CD8-positive, alpha-beta T cell (primary cell): ENCODE measurements at regions of chr19 and their contacts with region 1.

Region 1: GRCh38 chr19:16076154-16076957 is at the start of gene TPM4:
- DNase-seq: peak; percentile 57 to 94 (median 81)
- ATAC-seq: peak; percentile 48
- H3K4me3 ChIP-seq: peak within 1 kb of the TSS; percentile 59 to 79
- H3K4me3 Mint-ChIP-seq: peak within 1 kb of the TSS; percentile 79
- H3K27ac ChIP-seq: peak within 1 kb of the TSS; percentile 64 to 92
- H3K27ac Mint-ChIP-seq: peak within 1 kb of the TSS; percentile 96
- H3K4me1 ChIP-seq: peaks cover 81% of the 10 kb centered on the region
- H3K4me1 Mint-ChIP-seq: peaks cover 74% of the 10 kb centered on the region
- H3K27me3 ChIP-seq: no peaks in the 10 kb centered on the region
- H3K27me3 Mint-ChIP-seq: no peaks in the 10 kb centered on the region
- CTCF ChIP-seq: no peak
- total RNA-seq, gene TPM4: 187 to 199 TPM

Region 2: DNA sequence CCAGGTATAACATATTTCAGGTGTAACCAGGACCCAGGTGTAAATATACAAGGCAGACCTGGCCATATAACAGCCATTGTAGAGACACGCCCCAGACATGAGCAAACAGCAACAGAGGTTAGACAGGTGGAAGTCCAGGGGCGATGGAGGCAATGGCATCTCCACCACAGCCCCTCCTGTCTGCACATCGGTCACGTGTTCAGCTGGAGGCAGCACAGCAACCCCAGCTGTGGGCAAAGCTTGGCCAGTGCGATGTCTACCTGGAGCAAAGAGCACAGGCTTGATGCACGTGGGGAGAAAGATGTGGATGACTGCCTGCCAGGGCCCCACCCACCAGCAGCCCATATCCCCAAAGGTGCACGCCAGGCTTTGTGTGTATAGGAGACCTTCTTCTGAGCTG is 182.9 kb before region 1 on chr19:
- CTCF ChIA-PET with region 1: no interaction called
- POLR2A ChIA-PET with region 1: no interaction called
- intact Hi-C with region 1: no loop called
- DNase-seq: no peak
- ATAC-seq: no peak
- H3K4me3 ChIP-seq: no peak overlapping the region
- H3K4me3 Mint-ChIP-seq: no peak overlapping the region
- H3K27ac ChIP-seq: no peak overlapping the region
- H3K27ac Mint-ChIP-seq: no peak overlapping the region
- H3K4me1 ChIP-seq: no peaks in the 10 kb centered on the region
- H3K4me1 Mint-ChIP-seq: no peaks in the 10 kb centered on the region
- H3K27me3 ChIP-seq: peaks cover 0 to 3% of the 10 kb centered on the region in 2 experiments
- H3K27me3 Mint-ChIP-seq: peaks cover 20% of the 10 kb centered on the region
- CTCF ChIP-seq: no peak

Region 3: DNA sequence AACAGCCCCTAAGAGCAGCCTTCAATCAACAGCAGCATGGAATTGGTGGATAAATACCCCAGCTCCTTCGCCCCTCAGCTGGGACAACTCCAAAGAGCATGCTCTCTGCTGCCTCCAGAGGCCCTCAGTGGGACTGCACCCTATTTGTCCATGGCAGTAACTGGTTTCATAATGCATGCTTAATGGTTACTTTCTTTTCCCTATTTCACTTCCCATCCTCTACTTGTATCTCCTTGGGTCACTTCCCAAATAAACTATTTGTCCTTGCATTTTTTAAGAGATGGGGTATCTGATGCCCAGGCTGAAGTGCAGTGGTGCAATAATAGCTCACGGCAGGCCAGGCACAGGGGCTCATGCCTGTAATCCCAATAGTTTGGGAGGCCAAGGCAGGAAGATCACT is 13.6 kb before region 1 on chr19:
- CTCF ChIA-PET with region 1: interaction called, 33 read pairs
- POLR2A ChIA-PET with region 1: no interaction called
- intact Hi-C with region 1: loop called in 1 of 2 experiments (anchors 1 kb)
- DNase-seq: peak; percentile 51 to 78 (median 66)
- ATAC-seq: peak; percentile 86
- H3K4me3 ChIP-seq: no peak overlapping the region
- H3K4me3 Mint-ChIP-seq: no peak overlapping the region
- H3K27ac ChIP-seq: no peak overlapping the region
- H3K27ac Mint-ChIP-seq: no peak overlapping the region
- H3K4me1 ChIP-seq: peaks cover 26% of the 10 kb centered on the region
- H3K4me1 Mint-ChIP-seq: peaks cover 16% of the 10 kb centered on the region
- H3K27me3 ChIP-seq: no peaks in the 10 kb centered on the region
- H3K27me3 Mint-ChIP-seq: no peaks in the 10 kb centered on the region
- CTCF ChIP-seq: peak; percentile 85

Region 4: GRCh38 chr19:16088351-16089009 is 12.1 kb after region 1 on chr19:
- CTCF ChIA-PET with region 1: interaction called, 80 read pairs
- POLR2A ChIA-PET with region 1: interaction called, 21 read pairs
- intact Hi-C with region 1: loop called in 1 of 2 experiments (anchors 1 kb)
- DNase-seq: no peak
- ATAC-seq: no peak
- H3K4me3 ChIP-seq: no peak overlapping the region
- H3K4me3 Mint-ChIP-seq: no peak overlapping the region
- H3K27ac ChIP-seq: no peak overlapping the region
- H3K27ac Mint-ChIP-seq: no peak overlapping the region
- H3K4me1 ChIP-seq: peaks cover 26% of the 10 kb centered on the region
- H3K4me1 Mint-ChIP-seq: peaks cover 30% of the 10 kb centered on the region
- H3K27me3 ChIP-seq: no peaks in the 10 kb centered on the region
- H3K27me3 Mint-ChIP-seq: no peaks in the 10 kb centered on the region
- CTCF ChIP-seq: no peak

Region 5: DNA sequence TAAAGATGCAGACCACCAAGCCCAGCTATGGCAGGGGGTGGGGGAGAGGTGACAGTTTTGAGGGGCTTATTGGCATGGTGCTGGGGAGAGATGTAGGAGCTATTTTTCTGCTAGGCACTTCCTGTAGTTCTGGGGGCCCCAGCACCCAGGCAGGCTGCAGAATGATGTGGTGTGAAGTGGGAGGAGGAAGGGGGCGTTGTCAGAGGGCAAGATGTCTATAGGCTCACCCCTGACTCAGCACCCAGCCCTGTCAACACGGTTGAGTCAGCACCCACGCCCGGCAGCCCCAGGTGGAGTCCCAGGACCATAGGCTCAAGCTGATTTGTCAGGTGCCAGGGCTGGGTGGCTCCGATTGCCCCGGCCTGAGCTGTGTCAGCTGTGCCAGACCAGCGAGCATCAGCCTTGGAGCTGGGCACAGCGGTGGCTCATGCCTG is 254.0 kb after region 1 on chr19:
- CTCF ChIA-PET with region 1: no interaction called
- POLR2A ChIA-PET with region 1: interaction called, 3 read pairs
- intact Hi-C with region 1: loop called in 1 of 2 experiments (anchors 5 kb)
- DNase-seq: peak; percentile 88 to 99 (median 95)
- ATAC-seq: peak; percentile 74
- H3K4me3 ChIP-seq: no peak overlapping the region
- H3K4me3 Mint-ChIP-seq: peak overlapping the region; percentile 59
- H3K27ac ChIP-seq: peak overlapping the region; percentile 93 to 99
- H3K27ac Mint-ChIP-seq: peak overlapping the region; percentile 96
- H3K4me1 ChIP-seq: peaks cover 36% of the 10 kb centered on the region
- H3K4me1 Mint-ChIP-seq: peaks cover 46% of the 10 kb centered on the region
- H3K27me3 ChIP-seq: no peaks in the 10 kb centered on the region
- H3K27me3 Mint-ChIP-seq: no peaks in the 10 kb centered on the region
- CTCF ChIP-seq: no peak

Region 6: GRCh38 chr19:16371540-16371986 is 295.2 kb after region 1 on chr19:
- CTCF ChIA-PET with region 1: interaction called, 4 read pairs
- POLR2A ChIA-PET with region 1: no interaction called
- intact Hi-C with region 1: loop called in 1 of 2 experiments (anchors 5 kb)
- DNase-seq: peak; percentile 87 to 97 (median 92)
- ATAC-seq: peak; percentile 41
- H3K4me3 ChIP-seq: peak overlapping the region; percentile 33 to 44
- H3K4me3 Mint-ChIP-seq: no peak overlapping the region
- H3K27ac ChIP-seq: peak overlapping the region; percentile 91 to 95
- H3K27ac Mint-ChIP-seq: no peak overlapping the region
- H3K4me1 ChIP-seq: peaks cover 95% of the 10 kb centered on the region
- H3K4me1 Mint-ChIP-seq: peaks cover 68% of the 10 kb centered on the region
- H3K27me3 ChIP-seq: no peaks in the 10 kb centered on the region
- H3K27me3 Mint-ChIP-seq: no peaks in the 10 kb centered on the region
- CTCF ChIP-seq: no peak